Activated CD8-positive, alpha-beta T cell treated with anti-CD3 and anti-CD28 coated beads, Interleukin-2, amount 10 ng/mL, durations not matched to agents 7 days and 5 days (primary cell): ENCODE measurements at regions of chr5 and their contacts with region 1.

Region 1: GRCh38 chr5:102561894-102562760 is 63.3 kb upstream of the SLCO6A1 start:
- DNase-seq: peak; percentile 25
- ATAC-seq: no peak
- H3K4me3 Mint-ChIP-seq: no peak overlapping the region
- H3K27ac Mint-ChIP-seq: no peak overlapping the region
- H3K4me1 Mint-ChIP-seq: no peaks in the 10 kb centered on the region
- H3K27me3 Mint-ChIP-seq: peaks cover 4% of the 10 kb centered on the region

Region 2: GRCh38 chr5:102545175-102545574 is 17.0 kb before region 1 on chr5:
- CTCF ChIA-PET with region 1: interaction called, 13 read pairs
- POLR2A ChIA-PET with region 1: no interaction called
- DNase-seq: no peak
- ATAC-seq: no peak
- H3K4me3 Mint-ChIP-seq: no peak overlapping the region
- H3K27ac Mint-ChIP-seq: no peak overlapping the region
- H3K4me1 Mint-ChIP-seq: no peaks in the 10 kb centered on the region
- H3K27me3 Mint-ChIP-seq: peaks cover 13% of the 10 kb centered on the region

Region 3: DNA sequence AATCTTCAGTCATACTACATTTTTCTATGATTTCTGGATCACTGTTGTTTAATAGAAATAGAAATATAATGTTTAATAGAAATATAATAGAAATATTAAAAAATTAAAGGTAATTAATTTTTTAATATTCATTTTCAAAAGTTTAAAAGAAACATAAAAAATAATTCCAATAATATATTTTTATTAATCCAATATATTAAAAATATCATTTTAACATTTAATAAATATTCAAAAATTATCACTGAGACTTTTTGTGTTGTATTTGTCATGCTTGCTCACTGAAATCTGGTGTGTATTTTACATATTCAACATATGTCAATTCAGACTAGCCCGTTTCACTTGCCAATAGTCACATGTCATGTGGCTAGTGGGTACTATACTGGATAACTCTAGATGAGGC is 17.3 kb after region 1 on chr5:
- CTCF ChIA-PET with region 1: no interaction called
- POLR2A ChIA-PET with region 1: no interaction called
- DNase-seq: no peak
- ATAC-seq: no peak
- H3K4me3 Mint-ChIP-seq: no peak overlapping the region
- H3K27ac Mint-ChIP-seq: no peak overlapping the region
- H3K4me1 Mint-ChIP-seq: no peaks in the 10 kb centered on the region
- H3K27me3 Mint-ChIP-seq: peaks cover 10% of the 10 kb centered on the region